Endothelial cell of umbilical vein (primary cell): ENCODE measurements at regions of chr2 and their contacts with region 1.

Region 1: DNA sequence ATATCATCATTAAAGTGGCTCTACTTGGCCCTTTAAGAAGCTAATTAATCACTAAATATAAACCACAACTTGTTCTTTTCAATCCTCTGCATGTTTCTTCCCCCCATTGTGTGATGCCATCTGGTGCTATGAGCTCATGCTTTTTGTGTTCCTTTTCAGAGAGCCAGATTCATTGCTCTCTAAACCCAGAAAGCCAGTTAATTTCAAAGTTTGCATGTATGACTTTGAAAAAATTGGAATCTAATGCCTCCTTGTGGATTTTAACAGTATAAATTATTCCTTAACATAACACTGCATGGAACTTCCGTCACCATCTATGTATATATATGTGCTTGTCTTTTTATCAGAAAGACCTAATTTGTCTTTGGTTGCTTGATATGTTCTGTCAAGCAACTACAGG is 31.1 kb downstream of the TMEM178A start:
- DNase-seq: peak; percentile 84
- H3K4me3 ChIP-seq: no peak overlapping the region
- H3K27ac ChIP-seq: peak overlapping the region; percentile 13
- H3K4me1 ChIP-seq: peaks cover 18% of the 10 kb centered on the region
- H3K27me3 ChIP-seq: no peaks in the 10 kb centered on the region
- CTCF ChIP-seq: peak in 1 of 2 donors; percentile 17
- POLR2A ChIP-seq: no peak

Region 2: GRCh38 chr2:39523308-39524044 is 173.4 kb before region 1 on chr2:
- CTCF ChIA-PET with region 1: interaction called, 73 read pairs
- POLR2A ChIA-PET with region 1: no interaction called
- dilution Hi-C with region 1: no loop called
- intact Hi-C with region 1: no loop called
- DNase-seq: peak; percentile 65
- H3K4me3 ChIP-seq: no peak overlapping the region
- H3K27ac ChIP-seq: peak overlapping the region; percentile 65
- H3K4me1 ChIP-seq: peaks cover 14% of the 10 kb centered on the region
- H3K27me3 ChIP-seq: no peaks in the 10 kb centered on the region
- CTCF ChIP-seq: no peak
- POLR2A ChIP-seq: no peak

Region 3: DNA sequence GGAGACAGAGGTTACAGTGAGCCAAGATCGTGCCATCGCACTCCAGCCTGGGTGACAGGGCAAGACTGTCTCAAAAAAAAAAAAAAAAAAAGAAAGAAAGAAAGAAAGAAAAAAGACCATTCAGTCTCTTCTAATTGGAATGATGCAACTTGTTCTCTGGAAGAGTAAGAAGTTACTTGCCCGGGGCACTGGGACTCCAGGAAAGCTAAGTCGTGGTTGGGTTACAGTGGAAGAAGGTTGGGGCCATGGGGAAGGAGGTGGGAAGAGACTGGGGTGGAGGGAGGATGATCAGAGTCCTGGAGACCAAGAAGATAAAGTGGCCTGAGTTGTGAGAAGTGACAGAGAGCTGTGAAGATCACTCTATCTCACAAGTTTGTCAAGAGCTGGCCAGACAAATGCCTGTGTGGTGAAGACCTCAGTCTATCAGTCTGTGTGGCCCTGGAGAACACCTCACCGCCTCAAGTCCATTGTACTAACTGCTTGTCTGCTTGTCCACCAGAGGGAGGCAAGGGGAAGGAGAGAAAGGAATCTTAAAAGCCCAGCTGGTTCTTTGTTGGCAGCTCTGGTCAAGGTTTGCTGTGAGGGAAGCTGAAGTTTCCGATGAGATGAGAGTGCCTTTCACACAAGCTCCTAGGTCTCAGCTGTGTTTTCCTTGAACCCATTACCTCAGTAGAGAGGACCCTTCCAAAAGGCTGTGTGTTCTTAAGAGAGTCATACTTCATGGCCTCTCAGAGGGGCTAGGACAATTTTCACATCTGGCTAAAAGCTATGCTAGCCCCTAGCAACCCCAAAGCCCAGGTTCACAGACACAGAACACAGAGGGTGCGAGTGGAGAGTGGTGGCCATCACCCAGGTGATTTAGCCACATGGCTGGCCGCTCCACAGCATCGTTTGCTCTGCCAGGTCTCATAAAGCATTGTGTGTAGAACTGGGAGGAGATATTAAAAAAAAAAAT is 103.1 kb before region 1 on chr2:
- CTCF ChIA-PET with region 1: interaction called, 74 read pairs
- POLR2A ChIA-PET with region 1: no interaction called
- dilution Hi-C with region 1: no loop called
- intact Hi-C with region 1: loop called (anchors 1 kb)
- DNase-seq: peak; percentile 74
- H3K4me3 ChIP-seq: no peak overlapping the region
- H3K27ac ChIP-seq: no peak overlapping the region
- H3K4me1 ChIP-seq: no peaks in the 10 kb centered on the region
- H3K27me3 ChIP-seq: no peaks in the 10 kb centered on the region
- CTCF ChIP-seq: peak; percentile 48 to 71
- POLR2A ChIP-seq: no peak

Region 4: GRCh38 chr2:39851651-39852110 is 154.8 kb after region 1 on chr2:
- CTCF ChIA-PET with region 1: no interaction called
- POLR2A ChIA-PET with region 1: no interaction called
- dilution Hi-C with region 1: no loop called
- intact Hi-C with region 1: no loop called
- DNase-seq: no peak
- H3K4me3 ChIP-seq: no peak overlapping the region
- H3K27ac ChIP-seq: no peak overlapping the region
- H3K4me1 ChIP-seq: no peaks in the 10 kb centered on the region
- H3K27me3 ChIP-seq: no peaks in the 10 kb centered on the region
- CTCF ChIP-seq: no peak
- POLR2A ChIP-seq: no peak

Region 5: GRCh38 chr2:39881494-39881893 is 184.7 kb after region 1 on chr2:
- CTCF ChIA-PET with region 1: no interaction called
- POLR2A ChIA-PET with region 1: no interaction called
- dilution Hi-C with region 1: no loop called
- intact Hi-C with region 1: no loop called
- DNase-seq: no peak
- H3K4me3 ChIP-seq: no peak overlapping the region
- H3K27ac ChIP-seq: no peak overlapping the region
- H3K4me1 ChIP-seq: no peaks in the 10 kb centered on the region
- H3K27me3 ChIP-seq: no peaks in the 10 kb centered on the region
- CTCF ChIP-seq: no peak
- POLR2A ChIP-seq: no peak

Region 6: GRCh38 chr2:41079011-41079410 is 1382.2 kb after region 1 on chr2:
- CTCF ChIA-PET with region 1: no interaction called
- POLR2A ChIA-PET with region 1: no interaction called
- dilution Hi-C with region 1: no loop called
- intact Hi-C with region 1: no loop called
- DNase-seq: no peak
- H3K4me3 ChIP-seq: no peak overlapping the region
- H3K27ac ChIP-seq: no peak overlapping the region
- H3K4me1 ChIP-seq: no peaks in the 10 kb centered on the region
- H3K27me3 ChIP-seq: no peaks in the 10 kb centered on the region
- CTCF ChIP-seq: no peak
- POLR2A ChIP-seq: no peak